ENCODE measurements at regions of chr17 and their contacts with region 1.

Region 1: GRCh38 chr17:12545877-12546513 is 119.7 kb upstream of the MYOCD start:
- DNase-seq: peak; percentile 62
- CTCF ChIP-seq: peak; percentile 77

Region 2: GRCh38 chr17:12568358-12569251 is 22.6 kb after region 1 on chr17:
- CTCF ChIA-PET with region 1: interaction called, 12 read pairs
- POLR2A ChIA-PET with region 1: no interaction called
- DNase-seq: no peak
- CTCF ChIP-seq: no peak

Region 3: DNA sequence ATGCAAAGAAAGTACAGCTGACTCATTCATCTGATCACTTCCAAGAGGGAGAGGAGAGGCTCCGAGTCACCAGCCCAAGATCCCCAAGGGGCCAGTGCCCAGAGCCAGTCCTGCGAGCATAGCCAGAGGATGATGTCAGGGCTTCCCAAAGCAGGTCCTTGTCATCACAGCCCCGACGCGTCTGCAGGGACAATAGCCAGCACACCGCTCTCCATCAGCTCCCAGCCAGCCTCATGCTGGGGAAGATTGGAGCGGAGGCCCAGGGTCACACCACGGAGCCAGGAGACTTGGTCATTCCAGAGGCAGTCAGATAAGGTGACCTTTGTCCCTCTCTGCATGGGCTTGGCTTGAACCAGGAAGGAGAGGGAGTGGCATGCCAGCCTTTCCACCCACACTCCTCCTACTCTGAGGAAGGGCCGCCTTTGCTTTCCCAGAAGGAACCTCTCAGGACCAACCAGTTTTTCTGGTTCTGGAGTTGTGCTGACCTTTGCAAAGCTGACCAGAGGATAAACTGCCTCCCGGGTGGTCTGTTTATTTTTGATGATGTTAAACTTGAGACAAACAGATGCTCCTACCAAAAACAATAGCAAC is 185.0 kb after region 1 on chr17:
- CTCF ChIA-PET with region 1: no interaction called
- POLR2A ChIA-PET with region 1: no interaction called
- DNase-seq: no peak
- CTCF ChIP-seq: no peak